ENCODE measurements at regions of chr3 and their contacts with region 1.

Region 1: DNA sequence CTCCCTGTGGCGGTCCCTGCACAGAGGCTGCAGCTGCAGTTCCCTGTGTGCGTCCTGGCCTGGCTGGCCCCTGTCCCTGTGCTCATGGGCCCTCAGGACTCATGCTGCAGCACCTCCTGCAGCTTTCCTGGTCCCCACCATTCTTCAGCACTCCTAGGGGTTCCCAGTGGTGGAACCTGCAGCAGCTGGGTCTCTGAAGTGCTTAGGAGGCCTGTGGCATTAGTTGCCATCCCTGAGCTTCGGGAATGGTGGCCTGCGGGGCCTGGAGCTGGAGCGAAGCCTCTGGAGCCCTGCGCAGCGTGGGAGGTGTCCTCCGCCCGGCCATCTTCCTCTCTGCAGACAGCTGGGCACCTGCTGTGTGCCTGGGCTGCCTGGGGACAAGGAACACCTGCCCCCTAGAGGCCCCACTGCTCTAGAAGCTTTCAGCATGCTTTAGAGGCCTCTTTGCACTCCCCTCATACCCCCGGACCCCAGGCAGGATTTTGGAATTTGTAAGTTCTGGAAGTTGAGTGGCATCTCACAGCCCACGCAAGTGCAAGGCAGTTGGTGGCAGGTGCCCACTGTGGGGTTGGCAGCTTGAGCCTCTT is 13.1 kb downstream of the PLXNA1 start:
- DNase-seq: no peak
- ATAC-seq: no peak
- H3K4me3 ChIP-seq: no peak overlapping the region
- H3K27ac ChIP-seq: peak overlapping the region in 1 of 10 donors; percentile 77
- H3K4me1 ChIP-seq: peaks cover 30 to 99% (median 66%) of the 10 kb centered on the region in 9 donors
- H3K27me3 ChIP-seq: no peaks in the 10 kb centered on the region
- CTCF ChIP-seq: peak in 1 of 9 donors; percentile 17

Region 2: GRCh38 chr3:126746395-126747177 is 249.4 kb before region 1 on chr3:
- intact Hi-C with region 1: loop called in 4 of 10 experiments (anchors 5 kb)
- DNase-seq: peak; percentile 58 to 75
- ATAC-seq: peak; percentile 86 to 93 (median 91)
- H3K4me3 ChIP-seq: peak overlapping the region in 4 of 10 donors; percentile 2 to 20 (median 8)
- H3K27ac ChIP-seq: peak overlapping the region; percentile 67 to 91 (median 88)
- H3K4me1 ChIP-seq: peaks cover 0 to 49% (median 17%) of the 10 kb centered on the region in 9 donors
- H3K27me3 ChIP-seq: no peaks in the 10 kb centered on the region
- CTCF ChIP-seq: peak in 2 of 9 donors; percentile 11 to 21

Region 3: DNA sequence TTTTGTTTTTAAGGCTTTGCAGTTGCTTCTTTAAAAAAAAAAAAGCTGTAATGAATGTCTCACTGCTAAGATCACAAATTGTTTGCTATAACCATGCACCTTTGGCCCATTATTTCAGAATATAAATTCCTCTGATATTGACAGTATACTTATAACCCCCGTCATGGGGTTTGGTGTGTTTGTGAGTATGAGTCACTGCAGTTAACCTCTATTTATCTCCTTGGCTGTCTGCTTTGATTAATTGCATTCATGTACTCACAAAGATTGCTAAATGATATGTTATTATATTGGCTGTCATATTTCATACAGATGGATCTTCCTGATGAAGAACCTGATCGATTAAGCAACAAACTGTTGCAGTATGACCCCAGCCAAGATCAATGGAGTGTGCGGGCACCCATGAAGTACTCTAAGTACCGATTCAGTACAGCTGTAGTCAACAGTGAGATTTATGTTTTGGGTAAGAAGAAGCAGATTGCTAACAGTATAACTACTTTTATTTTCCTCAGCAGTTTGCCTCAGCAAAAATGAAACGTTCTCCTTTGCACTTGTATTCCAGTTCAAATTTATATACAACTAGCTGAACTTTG is 933.9 kb after region 1 on chr3:
- intact Hi-C with region 1: no loop called
- DNase-seq: no peak
- ATAC-seq: no peak
- H3K4me3 ChIP-seq: no peak overlapping the region
- H3K27ac ChIP-seq: no peak overlapping the region
- H3K4me1 ChIP-seq: peaks cover 0 to 15% (median 4%) of the 10 kb centered on the region in 9 donors
- H3K27me3 ChIP-seq: no peaks in the 10 kb centered on the region
- CTCF ChIP-seq: no peak